ENCODE measurements at regions of chr5 and their contacts with region 1.

Region 1: GRCh38 chr5:57137401-57137800 is 36.5 kb upstream of the GPBP1 start:
- DNase-seq: no peak
- H3K4me3 ChIP-seq: no peak overlapping the region
- H3K4me3 Mint-ChIP-seq: no peak overlapping the region
- H3K27ac ChIP-seq: no peak overlapping the region
- H3K27ac Mint-ChIP-seq: no peak overlapping the region
- H3K4me1 ChIP-seq: no peaks in the 10 kb centered on the region
- H3K4me1 Mint-ChIP-seq: no peaks in the 10 kb centered on the region
- H3K27me3 ChIP-seq: no peaks in the 10 kb centered on the region
- H3K27me3 Mint-ChIP-seq: peaks cover 14 to 15% of the 10 kb centered on the region in 2 donors

Region 2: DNA sequence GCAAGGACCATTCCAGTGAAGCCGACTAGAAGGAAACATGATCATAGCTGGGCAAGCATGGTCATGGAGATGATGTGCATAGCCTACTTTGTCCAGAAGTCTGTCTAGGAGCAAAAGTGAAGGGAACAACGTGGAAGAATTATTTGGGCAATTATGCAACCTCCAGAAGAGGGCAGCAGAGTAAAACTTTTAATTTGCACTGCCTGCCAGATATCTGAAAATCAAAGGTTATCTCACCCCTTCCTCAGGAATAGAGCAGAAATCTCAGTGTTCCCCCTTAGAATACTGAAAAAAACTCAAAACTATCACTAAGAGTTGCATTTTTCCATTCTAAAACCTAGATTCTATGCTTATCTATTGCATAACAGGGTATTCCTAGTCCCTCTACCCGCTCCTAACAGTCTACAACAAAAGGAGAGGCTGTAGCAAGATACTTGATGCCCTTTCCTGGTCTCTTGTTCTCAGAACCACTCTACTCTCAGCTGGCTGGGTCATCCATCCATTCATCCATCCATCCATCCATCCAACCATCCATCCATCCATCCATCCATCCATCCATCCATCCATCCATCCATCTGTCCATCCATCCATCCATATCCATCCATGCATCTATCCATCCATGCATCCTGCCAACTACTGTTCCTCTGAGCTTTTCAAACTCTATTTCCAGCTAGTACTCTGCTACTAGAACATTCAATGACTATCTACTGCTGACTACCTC is 236.4 kb before region 1 on chr5:
- CTCF ChIA-PET with region 1: interaction called, 54 read pairs
- POLR2A ChIA-PET with region 1: no interaction called
- DNase-seq: peak in 4 of 5 donors; percentile 2 to 47 (median 22)
- H3K4me3 ChIP-seq: no peak overlapping the region
- H3K4me3 Mint-ChIP-seq: no peak overlapping the region
- H3K27ac ChIP-seq: no peak overlapping the region
- H3K27ac Mint-ChIP-seq: no peak overlapping the region
- H3K4me1 ChIP-seq: no peaks in the 10 kb centered on the region
- H3K4me1 Mint-ChIP-seq: no peaks in the 10 kb centered on the region
- H3K27me3 ChIP-seq: no peaks in the 10 kb centered on the region
- H3K27me3 Mint-ChIP-seq: peaks cover 1 to 6% of the 10 kb centered on the region in 2 donors

Region 3: DNA sequence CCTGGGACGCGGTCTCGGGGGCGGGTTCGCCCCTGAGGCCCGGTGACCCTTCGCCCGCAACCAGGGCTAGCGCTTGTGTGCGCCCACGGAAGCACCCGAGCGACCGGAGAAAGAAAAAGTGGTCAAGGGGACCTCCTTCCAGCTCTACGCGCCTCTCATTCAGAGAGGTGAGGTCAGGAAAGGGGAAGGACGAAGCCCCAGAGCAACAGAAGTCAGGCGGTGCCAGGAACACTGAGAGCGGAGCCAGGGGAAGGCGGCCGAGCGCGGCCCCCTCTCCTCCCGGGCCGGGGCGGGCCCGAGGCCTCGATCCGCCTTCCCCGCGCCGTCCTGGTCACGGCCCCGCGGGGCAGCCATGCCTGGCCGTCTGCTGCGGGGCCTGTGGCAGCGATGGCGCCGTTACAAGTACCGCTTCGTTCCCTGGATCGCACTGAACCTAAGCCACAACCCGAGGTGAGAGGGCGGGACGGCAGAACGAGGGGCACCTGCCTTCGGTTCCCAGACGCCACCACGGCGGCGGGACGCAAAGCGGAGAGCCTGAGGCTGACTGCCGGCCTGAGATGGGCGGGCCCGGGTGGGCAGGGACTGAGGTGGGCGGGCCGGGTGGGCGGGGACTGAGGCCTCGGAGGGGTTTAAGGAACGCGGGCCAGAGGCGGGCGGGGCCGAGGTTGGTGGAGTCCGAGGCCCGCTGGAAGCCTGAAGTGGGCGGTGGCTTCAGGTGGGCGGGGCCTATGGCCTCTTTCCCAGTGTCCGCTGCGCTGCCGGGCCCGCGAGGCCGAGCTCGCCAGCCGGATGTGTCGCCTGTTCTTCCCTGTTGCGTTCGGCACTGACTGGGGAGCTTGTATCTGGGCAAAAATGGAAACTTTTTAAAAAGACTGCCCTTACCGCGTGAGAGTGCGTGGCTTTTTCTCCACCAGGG is 227.8 kb before region 1 on chr5 and contains the start of gene SETD9:
- CTCF ChIA-PET with region 1: interaction called, 54 read pairs
- POLR2A ChIA-PET with region 1: no interaction called
- DNase-seq: peak; percentile 79 to 90 (median 84)
- H3K4me3 ChIP-seq: peak within 1 kb of the TSS; percentile 78
- H3K4me3 Mint-ChIP-seq: peak within 1 kb of the TSS; percentile 88 to 98 (median 94)
- H3K27ac ChIP-seq: peak within 1 kb of the TSS; percentile 82
- H3K27ac Mint-ChIP-seq: peak within 1 kb of the TSS; percentile 77 to 93 (median 91)
- H3K4me1 ChIP-seq: peaks cover 8% of the 10 kb centered on the region
- H3K4me1 Mint-ChIP-seq: peaks cover 15 to 21% (median 19%) of the 10 kb centered on the region in 3 donors
- H3K27me3 ChIP-seq: no peaks in the 10 kb centered on the region
- H3K27me3 Mint-ChIP-seq: peaks cover 0 to 1% of the 10 kb centered on the region in 2 donors
- total RNA-seq, gene SETD9: 13.9 to 15.0 TPM

Region 4: DNA sequence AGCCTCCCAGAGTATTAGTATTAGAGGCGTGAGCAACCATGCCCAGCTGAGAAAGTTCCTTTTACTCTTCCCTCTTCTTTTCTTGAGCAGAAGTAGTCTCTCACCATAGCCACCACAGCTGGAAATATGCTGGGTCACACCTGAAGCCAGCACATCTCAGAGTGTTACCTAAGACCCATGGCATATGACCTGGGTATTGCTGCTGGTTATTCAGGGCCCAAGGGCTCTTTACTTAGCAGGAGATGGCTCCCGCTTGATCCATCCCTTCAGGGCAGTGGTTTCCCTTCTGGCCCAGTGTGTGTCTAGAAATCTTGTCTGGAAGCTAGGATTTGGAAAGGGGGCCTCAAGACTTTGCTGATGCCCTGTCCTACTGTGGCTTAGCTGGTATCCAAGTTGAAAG is 13.3 kb after region 1 on chr5:
- CTCF ChIA-PET with region 1: interaction called, 26 read pairs
- POLR2A ChIA-PET with region 1: no interaction called
- DNase-seq: no peak
- H3K4me3 ChIP-seq: no peak overlapping the region
- H3K4me3 Mint-ChIP-seq: no peak overlapping the region
- H3K27ac ChIP-seq: no peak overlapping the region
- H3K27ac Mint-ChIP-seq: no peak overlapping the region
- H3K4me1 ChIP-seq: no peaks in the 10 kb centered on the region
- H3K4me1 Mint-ChIP-seq: no peaks in the 10 kb centered on the region
- H3K27me3 ChIP-seq: no peaks in the 10 kb centered on the region
- H3K27me3 Mint-ChIP-seq: peaks cover 6 to 19% of the 10 kb centered on the region in 2 donors

Region 5: DNA sequence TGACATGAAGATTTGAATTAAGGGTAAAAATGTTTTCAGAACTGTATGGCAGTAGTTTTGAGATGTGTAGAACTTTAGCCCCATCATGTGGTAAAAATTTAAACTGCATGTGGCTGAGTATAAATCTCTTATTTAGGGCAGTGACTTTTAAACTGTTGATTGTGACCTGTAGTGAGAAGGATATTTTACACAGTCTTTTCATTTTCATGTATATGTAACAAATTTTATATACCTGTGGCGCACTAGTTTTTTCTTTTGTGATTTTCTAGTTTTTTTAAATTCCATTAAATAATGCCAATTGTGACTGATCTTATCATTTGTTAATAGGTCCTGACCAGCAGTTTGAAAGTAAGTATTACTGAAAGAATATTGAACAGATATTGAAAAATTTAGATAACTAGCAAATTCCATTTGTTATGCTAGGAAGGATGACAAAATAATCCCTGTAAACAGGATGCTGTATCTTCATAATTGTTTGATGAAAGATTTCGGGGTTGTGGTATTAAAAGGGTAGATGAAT is 83.7 kb after region 1 on chr5:
- CTCF ChIA-PET with region 1: interaction called, 25 read pairs
- POLR2A ChIA-PET with region 1: no interaction called
- DNase-seq: peak in 2 of 5 donors; percentile 58 to 63
- H3K4me3 ChIP-seq: no peak overlapping the region
- H3K4me3 Mint-ChIP-seq: no peak overlapping the region
- H3K27ac ChIP-seq: no peak overlapping the region
- H3K27ac Mint-ChIP-seq: peak overlapping the region; percentile 34 to 91 (median 73)
- H3K4me1 ChIP-seq: peaks cover 10% of the 10 kb centered on the region
- H3K4me1 Mint-ChIP-seq: peaks cover 38 to 71% (median 50%) of the 10 kb centered on the region in 3 donors
- H3K27me3 ChIP-seq: no peaks in the 10 kb centered on the region
- H3K27me3 Mint-ChIP-seq: no peaks in the 10 kb centered on the region

Region 6: GRCh38 chr5:57613726-57614125 is 476.3 kb after region 1 on chr5:
- CTCF ChIA-PET with region 1: no interaction called
- POLR2A ChIA-PET with region 1: no interaction called
- DNase-seq: no peak
- H3K4me3 ChIP-seq: no peak overlapping the region
- H3K4me3 Mint-ChIP-seq: no peak overlapping the region
- H3K27ac ChIP-seq: no peak overlapping the region
- H3K27ac Mint-ChIP-seq: no peak overlapping the region
- H3K4me1 ChIP-seq: no peaks in the 10 kb centered on the region
- H3K4me1 Mint-ChIP-seq: no peaks in the 10 kb centered on the region
- H3K27me3 ChIP-seq: no peaks in the 10 kb centered on the region
- H3K27me3 Mint-ChIP-seq: no peaks in the 10 kb centered on the region